Activated CD8-positive, alpha-beta T cell treated with anti-CD3 and anti-CD28 coated beads for 36 hours (primary cell): ENCODE measurements at regions of chr12 and their contacts with region 1.

Region 1: DNA sequence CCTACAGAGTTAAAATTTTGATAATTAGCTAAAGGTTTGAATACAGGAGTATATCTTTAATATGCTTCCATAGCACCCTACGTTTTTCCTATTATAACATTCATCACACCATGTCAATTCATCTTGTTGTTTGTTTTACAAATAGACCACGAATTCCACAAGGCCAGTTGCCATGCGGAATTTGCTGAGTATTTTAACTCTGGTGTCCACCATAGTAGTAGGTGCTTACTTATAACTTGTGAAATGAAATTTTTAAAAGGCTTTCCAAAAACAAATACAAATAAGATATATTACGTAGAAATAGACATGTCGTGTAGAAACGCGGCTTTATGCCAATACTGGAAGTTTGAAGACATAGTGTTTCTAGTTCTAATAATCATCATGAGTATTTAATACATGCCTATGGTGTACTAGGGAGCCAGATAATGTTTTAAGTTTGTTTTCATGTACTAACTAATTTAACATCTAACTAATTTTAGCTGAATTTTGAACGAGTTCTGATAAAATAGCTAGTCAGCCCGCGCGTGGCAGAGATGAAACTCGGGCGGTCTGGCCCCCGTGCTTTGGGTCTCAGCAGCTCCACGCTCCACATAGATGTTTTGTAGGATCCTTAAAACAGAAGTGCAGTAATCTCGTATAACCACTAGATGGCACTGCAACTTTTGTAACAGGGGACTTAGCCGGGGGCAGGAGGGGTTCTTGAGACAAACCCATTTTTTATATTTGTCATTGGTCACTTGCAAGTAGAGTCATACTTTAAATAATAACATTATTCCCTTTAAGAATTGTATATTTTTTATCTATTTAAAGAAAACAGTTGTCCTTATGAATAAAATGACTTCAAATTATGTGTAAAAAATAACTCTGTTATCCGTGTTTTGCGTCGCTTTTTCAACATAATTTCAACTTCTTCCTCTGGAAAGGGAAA is 10.2 kb downstream of the CD69 start:
- DNase-seq: peak; percentile 73
- ATAC-seq: peak; percentile 66
- H3K4me3 Mint-ChIP-seq: peak overlapping the region; percentile 67
- H3K27ac Mint-ChIP-seq: peak overlapping the region; percentile 86
- H3K4me1 Mint-ChIP-seq: peaks cover 57% of the 10 kb centered on the region
- H3K27me3 Mint-ChIP-seq: no peaks in the 10 kb centered on the region
- CTCF ChIP-seq: peak; percentile 78

Region 2: DNA sequence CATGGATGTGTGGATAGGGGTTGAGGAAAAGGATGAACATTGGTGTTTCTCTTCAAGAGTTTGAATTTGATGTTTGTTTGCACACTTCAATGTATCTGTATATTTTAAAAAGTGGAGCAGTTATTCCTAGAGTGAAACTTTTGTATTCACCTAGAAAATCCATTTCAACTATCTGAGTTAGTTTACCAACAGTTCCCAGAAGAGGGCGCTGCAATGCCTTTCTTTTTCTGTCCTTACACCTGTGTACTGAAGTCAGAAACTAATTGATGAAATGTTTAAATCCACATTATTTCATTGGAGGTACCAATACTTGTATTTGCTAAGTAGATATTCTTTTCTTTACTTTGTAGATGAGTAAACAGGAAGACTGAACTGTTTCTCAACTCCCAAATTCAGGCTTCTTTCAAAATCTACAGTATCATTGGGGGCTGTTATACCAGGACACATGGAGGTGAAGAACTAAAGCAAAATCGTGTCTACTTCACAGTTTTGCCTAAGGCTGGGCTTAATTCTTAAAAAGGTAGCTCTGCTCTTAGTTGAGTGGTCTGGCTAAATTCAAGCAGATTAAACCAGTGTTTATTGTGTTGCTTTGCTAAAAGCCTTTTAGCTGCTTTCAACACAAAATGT is 116.2 kb before region 1 on chr12:
- CTCF ChIA-PET with region 1: interaction called, 20 read pairs
- POLR2A ChIA-PET with region 1: no interaction called
- intact Hi-C with region 1: no loop called
- DNase-seq: peak; percentile 92
- ATAC-seq: peak; percentile 89
- H3K4me3 Mint-ChIP-seq: peak overlapping the region; percentile 31
- H3K27ac Mint-ChIP-seq: peak overlapping the region; percentile 85
- H3K4me1 Mint-ChIP-seq: peaks cover 54% of the 10 kb centered on the region
- H3K27me3 Mint-ChIP-seq: no peaks in the 10 kb centered on the region
- CTCF ChIP-seq: peak; percentile 91

Region 3: GRCh38 chr12:9687228-9687627 is 63.3 kb before region 1 on chr12:
- CTCF ChIA-PET with region 1: interaction called, 11 read pairs
- POLR2A ChIA-PET with region 1: no interaction called
- intact Hi-C with region 1: no loop called
- DNase-seq: peak; percentile 43
- ATAC-seq: peak; percentile 70
- H3K4me3 Mint-ChIP-seq: no peak overlapping the region
- H3K27ac Mint-ChIP-seq: peak overlapping the region; percentile 42
- H3K4me1 Mint-ChIP-seq: peaks cover 74% of the 10 kb centered on the region
- H3K27me3 Mint-ChIP-seq: no peaks in the 10 kb centered on the region
- CTCF ChIP-seq: no peak

Region 4: GRCh38 chr12:9797722-9798619 is 47.4 kb after region 1 on chr12:
- CTCF ChIA-PET with region 1: interaction called, 791 read pairs
- POLR2A ChIA-PET with region 1: interaction called, 501 read pairs
- intact Hi-C with region 1: loop called (anchors 1 kb)
- DNase-seq: peak; percentile 84
- ATAC-seq: peak; percentile 83
- H3K4me3 Mint-ChIP-seq: peak overlapping the region; percentile 74
- H3K27ac Mint-ChIP-seq: peak overlapping the region; percentile 86
- H3K4me1 Mint-ChIP-seq: peaks cover 47% of the 10 kb centered on the region
- H3K27me3 Mint-ChIP-seq: no peaks in the 10 kb centered on the region
- CTCF ChIP-seq: peak; percentile 80

Region 5: GRCh38 chr12:9869307-9870161 is 119.0 kb after region 1 on chr12 and contains the start of gene CLEC2B:
- CTCF ChIA-PET with region 1: interaction called, 21 read pairs
- POLR2A ChIA-PET with region 1: interaction called, 292 read pairs
- intact Hi-C with region 1: no loop called
- DNase-seq: peak; percentile 70
- ATAC-seq: peak; percentile 68
- H3K4me3 Mint-ChIP-seq: peak within 1 kb of the TSS; percentile 85
- H3K27ac Mint-ChIP-seq: peak within 1 kb of the TSS; percentile 89
- H3K4me1 Mint-ChIP-seq: peaks cover 23% of the 10 kb centered on the region
- H3K27me3 Mint-ChIP-seq: no peaks in the 10 kb centered on the region
- CTCF ChIP-seq: no peak
- total RNA-seq, gene CLEC2B: 38.4 to 43.2 TPM

Region 6: DNA sequence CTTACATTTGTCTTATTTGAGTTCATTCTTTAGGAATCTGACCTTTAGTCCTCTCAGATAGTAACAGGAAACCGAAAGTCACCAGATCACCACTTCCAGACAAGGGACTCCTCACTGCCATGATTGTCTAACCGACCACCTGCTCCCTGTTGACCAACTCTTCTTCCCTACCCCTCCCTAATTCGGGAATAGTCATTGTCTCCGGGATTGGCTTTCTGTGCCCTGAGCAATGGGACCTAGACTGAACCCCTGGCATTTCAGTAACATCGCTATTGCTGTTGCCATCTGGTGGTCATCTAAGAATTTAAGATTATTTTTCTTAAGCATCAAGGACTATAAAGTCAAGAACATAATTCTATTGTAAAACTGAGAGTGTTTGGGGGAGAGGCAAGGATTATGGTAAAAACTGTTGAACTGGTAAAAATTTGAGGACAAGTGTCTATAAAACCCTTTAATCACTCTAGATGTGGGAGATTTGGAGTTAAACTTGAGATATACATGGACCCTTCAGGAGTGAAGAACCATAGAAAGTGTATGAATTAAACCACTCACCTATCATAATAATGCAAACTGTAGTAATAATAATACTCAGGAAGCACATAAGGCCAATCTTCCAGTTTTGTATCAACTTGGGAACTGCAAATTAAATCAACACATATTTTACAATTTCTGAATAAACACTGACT is 175.3 kb after region 1 on chr12:
- CTCF ChIA-PET with region 1: interaction called, 27 read pairs
- POLR2A ChIA-PET with region 1: interaction called, 3 read pairs
- intact Hi-C with region 1: loop called (anchors 5 kb)
- DNase-seq: peak; percentile 7
- ATAC-seq: peak; percentile 73
- H3K4me3 Mint-ChIP-seq: peak overlapping the region; percentile 59
- H3K27ac Mint-ChIP-seq: peak overlapping the region; percentile 73
- H3K4me1 Mint-ChIP-seq: peaks cover 21% of the 10 kb centered on the region
- H3K27me3 Mint-ChIP-seq: no peaks in the 10 kb centered on the region
- CTCF ChIP-seq: peak; percentile 60

Region 7: GRCh38 chr12:10052193-10052913 is 301.8 kb after region 1 on chr12:
- CTCF ChIA-PET with region 1: no interaction called
- POLR2A ChIA-PET with region 1: no interaction called
- intact Hi-C with region 1: no loop called
- DNase-seq: no peak
- ATAC-seq: no peak
- H3K4me3 Mint-ChIP-seq: no peak overlapping the region
- H3K27ac Mint-ChIP-seq: no peak overlapping the region
- H3K4me1 Mint-ChIP-seq: peaks cover 8% of the 10 kb centered on the region
- H3K27me3 Mint-ChIP-seq: peaks cover 19% of the 10 kb centered on the region
- CTCF ChIP-seq: no peak

Region 8: GRCh38 chr12:10175846-10176636 is 425.5 kb after region 1 on chr12:
- CTCF ChIA-PET with region 1: no interaction called
- POLR2A ChIA-PET with region 1: no interaction called
- intact Hi-C with region 1: no loop called
- DNase-seq: no peak
- ATAC-seq: no peak
- H3K4me3 Mint-ChIP-seq: no peak overlapping the region
- H3K27ac Mint-ChIP-seq: no peak overlapping the region
- H3K4me1 Mint-ChIP-seq: no peaks in the 10 kb centered on the region
- H3K27me3 Mint-ChIP-seq: peaks cover 7% of the 10 kb centered on the region
- CTCF ChIP-seq: no peak